ENCODE measurements at regions of chr21 and their contacts with region 1.

Region 1: GRCh38 chr21:33924079-33924765 is 8.6 kb upstream of the ATP5PO start:
- DNase-seq: peak; percentile 85
- ATAC-seq: peak; percentile 95
- H3K4me3 ChIP-seq: no peak overlapping the region
- H3K4me3 Mint-ChIP-seq: no peak overlapping the region
- H3K27ac ChIP-seq: no peak overlapping the region
- H3K27ac Mint-ChIP-seq: no peak overlapping the region
- H3K4me1 ChIP-seq: peaks cover 0 to 5% of the 10 kb centered on the region in 2 donors
- H3K4me1 Mint-ChIP-seq: peaks cover 3% of the 10 kb centered on the region
- H3K27me3 ChIP-seq: peaks cover 0 to 3% (median 0%) of the 10 kb centered on the region in 4 experiments
- H3K27me3 Mint-ChIP-seq: peaks cover 3% of the 10 kb centered on the region
- CTCF ChIP-seq: peak; percentile 92

Region 2: GRCh38 chr21:33968080-33968994 is 44.1 kb after region 1 on chr21:
- CTCF ChIA-PET with region 1: interaction called, 23 read pairs
- POLR2A ChIA-PET with region 1: no interaction called
- intact Hi-C with region 1: no loop called
- DNase-seq: peak; percentile 33
- ATAC-seq: peak; percentile 57
- H3K4me3 ChIP-seq: no peak overlapping the region
- H3K4me3 Mint-ChIP-seq: peak overlapping the region; percentile 75
- H3K27ac ChIP-seq: no peak overlapping the region
- H3K27ac Mint-ChIP-seq: peak overlapping the region; percentile 50
- H3K4me1 ChIP-seq: no peaks in the 10 kb centered on the region
- H3K4me1 Mint-ChIP-seq: peaks cover 4% of the 10 kb centered on the region
- H3K27me3 ChIP-seq: no peaks in the 10 kb centered on the region
- H3K27me3 Mint-ChIP-seq: no peaks in the 10 kb centered on the region
- CTCF ChIP-seq: no peak

Region 3: GRCh38 chr21:34073032-34073869 is 149.0 kb after region 1 on chr21 and contains the starts of genes MRPS6 and SLC5A3:
- CTCF ChIA-PET with region 1: interaction called, 31 read pairs
- POLR2A ChIA-PET with region 1: interaction called, 3 read pairs
- intact Hi-C with region 1: loop called (anchors 2 kb)
- DNase-seq: peak; percentile 88
- ATAC-seq: peak; percentile 78
- H3K4me3 ChIP-seq: peak within 1 kb of the TSS; percentile 60 to 92 (median 79)
- H3K4me3 Mint-ChIP-seq: peak within 1 kb of the TSS; percentile 92
- H3K27ac ChIP-seq: peak within 1 kb of the TSS; percentile 51 to 69
- H3K27ac Mint-ChIP-seq: peak within 1 kb of the TSS; percentile 91
- H3K4me1 ChIP-seq: peaks cover 13 to 20% of the 10 kb centered on the region in 2 donors
- H3K4me1 Mint-ChIP-seq: peaks cover 45% of the 10 kb centered on the region
- H3K27me3 ChIP-seq: no peaks in the 10 kb centered on the region
- H3K27me3 Mint-ChIP-seq: no peaks in the 10 kb centered on the region
- CTCF ChIP-seq: no peak
- total RNA-seq, gene MRPS6: 36.5 and 37.9 TPM in 2 replicates
- total RNA-seq, gene SLC5A3: 16.7 and 18.0 TPM in 2 replicates

Region 4: DNA sequence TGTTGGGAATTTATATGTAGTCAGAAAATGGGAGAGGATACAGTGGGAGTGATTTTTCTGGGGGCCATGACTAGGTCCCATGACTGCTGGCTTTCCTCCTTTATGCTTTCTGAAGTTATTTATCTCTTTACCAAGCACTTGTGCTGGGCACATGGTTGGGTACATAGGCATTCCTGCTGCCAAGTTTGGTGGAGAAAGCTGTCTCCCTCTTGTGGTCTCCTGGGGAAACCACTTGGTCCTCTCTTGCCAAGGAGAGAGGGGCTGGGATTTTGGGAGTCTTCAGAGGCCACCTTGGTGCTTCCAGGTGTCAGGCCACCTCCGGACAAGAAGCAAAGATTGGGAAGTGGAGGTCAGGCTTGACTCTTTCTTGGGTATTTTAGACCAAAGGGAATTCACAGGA is 319.3 kb after region 1 on chr21:
- CTCF ChIA-PET with region 1: interaction called, 26 read pairs
- POLR2A ChIA-PET with region 1: no interaction called
- intact Hi-C with region 1: loop called (anchors 5 kb)
- DNase-seq: peak; percentile 8
- ATAC-seq: no peak
- H3K4me3 ChIP-seq: no peak overlapping the region
- H3K4me3 Mint-ChIP-seq: no peak overlapping the region
- H3K27ac ChIP-seq: no peak overlapping the region
- H3K27ac Mint-ChIP-seq: no peak overlapping the region
- H3K4me1 ChIP-seq: no peaks in the 10 kb centered on the region
- H3K4me1 Mint-ChIP-seq: no peaks in the 10 kb centered on the region
- H3K27me3 ChIP-seq: no peaks in the 10 kb centered on the region
- H3K27me3 Mint-ChIP-seq: peaks cover 3% of the 10 kb centered on the region
- CTCF ChIP-seq: no peak

Region 5: GRCh38 chr21:34367321-34367935 is 443.2 kb after region 1 on chr21:
- CTCF ChIA-PET with region 1: interaction called, 37 read pairs
- POLR2A ChIA-PET with region 1: no interaction called
- intact Hi-C with region 1: no loop called
- DNase-seq: peak; percentile 58
- ATAC-seq: peak; percentile 70
- H3K4me3 ChIP-seq: no peak overlapping the region
- H3K4me3 Mint-ChIP-seq: no peak overlapping the region
- H3K27ac ChIP-seq: no peak overlapping the region
- H3K27ac Mint-ChIP-seq: no peak overlapping the region
- H3K4me1 ChIP-seq: no peaks in the 10 kb centered on the region
- H3K4me1 Mint-ChIP-seq: no peaks in the 10 kb centered on the region
- H3K27me3 ChIP-seq: peaks cover 0 to 3% (median 0%) of the 10 kb centered on the region in 4 experiments
- H3K27me3 Mint-ChIP-seq: peaks cover 20% of the 10 kb centered on the region
- CTCF ChIP-seq: peak; percentile 78

Measured in B cell (primary cell).